PC-3 (cell line): ENCODE measurements at regions of chr17 and their contacts with region 1.

Region 1: GRCh38 chr17:70089513-70090148 is 14.6 kb downstream of the KCNJ16 start:
- DNase-seq: peak; percentile 62
- ATAC-seq: peak; percentile 67
- H3K4me3 ChIP-seq: no peak overlapping the region
- H3K27ac ChIP-seq: no peak overlapping the region
- H3K4me1 ChIP-seq: peaks cover 22% of the 10 kb centered on the region
- H3K27me3 ChIP-seq: no peaks in the 10 kb centered on the region
- CTCF ChIP-seq: no peak

Region 2: GRCh38 chr17:69575346-69575761 is 514.3 kb before region 1 on chr17:
- CTCF ChIA-PET with region 1: no interaction called
- POLR2A ChIA-PET with region 1: no interaction called
- intact Hi-C with region 1: loop called (anchors 1 kb)
- DNase-seq: peak; percentile 97
- ATAC-seq: peak; percentile 87
- H3K4me3 ChIP-seq: no peak overlapping the region; the same call in 1 of the 2 replicates
- H3K27ac ChIP-seq: peak overlapping the region; percentile 58
- H3K4me1 ChIP-seq: peaks cover 25% of the 10 kb centered on the region
- H3K27me3 ChIP-seq: no peaks in the 10 kb centered on the region
- CTCF ChIP-seq: no peak

Region 3: GRCh38 chr17:69773081-69773480 is 316.6 kb before region 1 on chr17:
- CTCF ChIA-PET with region 1: no interaction called
- POLR2A ChIA-PET with region 1: no interaction called
- intact Hi-C with region 1: loop called (anchors 1 kb)
- DNase-seq: peak; percentile 65
- ATAC-seq: peak; percentile 30; the same call in 1 of the 2 replicates
- H3K4me3 ChIP-seq: no peak overlapping the region
- H3K27ac ChIP-seq: no peak overlapping the region
- H3K4me1 ChIP-seq: peaks cover 30% of the 10 kb centered on the region
- H3K27me3 ChIP-seq: no peaks in the 10 kb centered on the region
- CTCF ChIP-seq: no peak

Region 4: DNA sequence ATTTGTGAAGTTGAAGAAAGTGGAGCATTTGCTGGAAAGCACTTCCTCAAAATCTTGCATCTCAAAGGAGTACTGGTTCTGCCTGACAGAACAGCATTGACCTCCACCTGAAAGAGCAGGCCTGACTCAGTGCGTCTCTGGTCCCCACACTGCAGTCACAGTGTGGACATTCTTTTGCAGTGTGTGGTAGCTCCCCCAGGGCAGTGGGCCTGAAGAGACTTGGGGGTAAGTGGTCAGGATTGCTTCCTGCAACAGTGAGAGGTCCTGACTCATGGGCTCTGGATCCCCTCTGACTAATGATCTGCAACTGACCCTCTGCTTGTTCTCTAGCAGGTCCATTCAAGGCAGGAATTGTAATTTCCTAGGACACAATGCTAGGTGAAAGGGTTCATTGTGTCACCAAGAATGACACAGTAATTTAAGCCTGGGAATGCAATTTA is 219.5 kb before region 1 on chr17:
- CTCF ChIA-PET with region 1: no interaction called
- POLR2A ChIA-PET with region 1: no interaction called
- intact Hi-C with region 1: loop called (anchors 1 kb)
- DNase-seq: peak; percentile 95
- ATAC-seq: peak; percentile 69
- H3K4me3 ChIP-seq: no peak overlapping the region
- H3K27ac ChIP-seq: peak overlapping the region; percentile 66
- H3K4me1 ChIP-seq: peaks cover 40% of the 10 kb centered on the region
- H3K27me3 ChIP-seq: no peaks in the 10 kb centered on the region
- CTCF ChIP-seq: no peak

Region 5: GRCh38 chr17:70110443-70110880 is 20.8 kb after region 1 on chr17:
- CTCF ChIA-PET with region 1: no interaction called
- POLR2A ChIA-PET with region 1: no interaction called
- intact Hi-C with region 1: no loop called
- DNase-seq: no peak
- ATAC-seq: no peak
- H3K4me3 ChIP-seq: no peak overlapping the region
- H3K27ac ChIP-seq: no peak overlapping the region
- H3K4me1 ChIP-seq: no peaks in the 10 kb centered on the region
- H3K27me3 ChIP-seq: no peaks in the 10 kb centered on the region
- CTCF ChIP-seq: no peak

Region 6: DNA sequence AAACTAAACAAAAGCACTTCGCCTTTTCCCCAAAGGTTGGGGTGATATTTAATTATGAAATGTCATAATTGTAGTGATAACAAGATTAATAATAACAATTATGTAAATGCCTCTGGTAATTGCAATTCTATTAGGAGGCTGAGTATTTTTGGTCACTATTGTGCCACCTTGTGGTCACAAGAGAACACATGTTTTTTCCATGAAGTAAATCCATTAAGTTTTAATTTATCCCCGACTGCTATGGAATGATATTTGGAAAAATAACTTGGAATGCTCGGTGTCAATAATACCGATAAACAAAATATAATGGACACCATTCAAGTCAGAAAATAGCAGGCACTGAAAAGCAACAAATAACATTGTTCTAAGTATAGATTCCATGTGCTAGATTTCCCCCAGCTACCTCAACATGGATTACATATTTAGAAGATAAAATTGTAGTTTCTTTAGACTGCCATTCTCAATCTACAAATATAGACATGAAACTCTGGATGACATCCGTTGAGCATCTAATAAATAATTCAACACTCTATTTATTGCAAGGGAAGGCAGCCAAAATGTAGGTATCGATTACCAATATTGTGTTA is 54.7 kb after region 1 on chr17:
- CTCF ChIA-PET with region 1: no interaction called
- POLR2A ChIA-PET with region 1: no interaction called
- intact Hi-C with region 1: loop called (anchors 1 kb)
- DNase-seq: peak; percentile 56
- ATAC-seq: no peak; the same call in 1 of the 2 replicates
- H3K4me3 ChIP-seq: no peak overlapping the region
- H3K27ac ChIP-seq: no peak overlapping the region
- H3K4me1 ChIP-seq: peaks cover 7% of the 10 kb centered on the region
- H3K27me3 ChIP-seq: no peaks in the 10 kb centered on the region
- CTCF ChIP-seq: peak; percentile 91

Region 7: GRCh38 chr17:70288540-70289290 is 199.1 kb after region 1 on chr17:
- CTCF ChIA-PET with region 1: no interaction called
- POLR2A ChIA-PET with region 1: no interaction called
- intact Hi-C with region 1: no loop called
- DNase-seq: no peak
- ATAC-seq: no peak
- H3K4me3 ChIP-seq: no peak overlapping the region
- H3K27ac ChIP-seq: no peak overlapping the region
- H3K4me1 ChIP-seq: no peaks in the 10 kb centered on the region
- H3K27me3 ChIP-seq: no peaks in the 10 kb centered on the region
- CTCF ChIP-seq: no peak

Region 8: GRCh38 chr17:70661342-70662222 is 572.0 kb after region 1 on chr17:
- CTCF ChIA-PET with region 1: no interaction called
- POLR2A ChIA-PET with region 1: interaction called, 18 read pairs
- intact Hi-C with region 1: no loop called
- DNase-seq: peak; percentile 68
- ATAC-seq: peak; percentile 97
- H3K4me3 ChIP-seq: no peak overlapping the region
- H3K27ac ChIP-seq: no peak overlapping the region
- H3K4me1 ChIP-seq: no peaks in the 10 kb centered on the region
- H3K27me3 ChIP-seq: peaks cover 57% of the 10 kb centered on the region
- CTCF ChIP-seq: no peak